Caco-2 (cell line): ENCODE measurements at regions of chr19 and their contacts with region 1.

Region 1: DNA sequence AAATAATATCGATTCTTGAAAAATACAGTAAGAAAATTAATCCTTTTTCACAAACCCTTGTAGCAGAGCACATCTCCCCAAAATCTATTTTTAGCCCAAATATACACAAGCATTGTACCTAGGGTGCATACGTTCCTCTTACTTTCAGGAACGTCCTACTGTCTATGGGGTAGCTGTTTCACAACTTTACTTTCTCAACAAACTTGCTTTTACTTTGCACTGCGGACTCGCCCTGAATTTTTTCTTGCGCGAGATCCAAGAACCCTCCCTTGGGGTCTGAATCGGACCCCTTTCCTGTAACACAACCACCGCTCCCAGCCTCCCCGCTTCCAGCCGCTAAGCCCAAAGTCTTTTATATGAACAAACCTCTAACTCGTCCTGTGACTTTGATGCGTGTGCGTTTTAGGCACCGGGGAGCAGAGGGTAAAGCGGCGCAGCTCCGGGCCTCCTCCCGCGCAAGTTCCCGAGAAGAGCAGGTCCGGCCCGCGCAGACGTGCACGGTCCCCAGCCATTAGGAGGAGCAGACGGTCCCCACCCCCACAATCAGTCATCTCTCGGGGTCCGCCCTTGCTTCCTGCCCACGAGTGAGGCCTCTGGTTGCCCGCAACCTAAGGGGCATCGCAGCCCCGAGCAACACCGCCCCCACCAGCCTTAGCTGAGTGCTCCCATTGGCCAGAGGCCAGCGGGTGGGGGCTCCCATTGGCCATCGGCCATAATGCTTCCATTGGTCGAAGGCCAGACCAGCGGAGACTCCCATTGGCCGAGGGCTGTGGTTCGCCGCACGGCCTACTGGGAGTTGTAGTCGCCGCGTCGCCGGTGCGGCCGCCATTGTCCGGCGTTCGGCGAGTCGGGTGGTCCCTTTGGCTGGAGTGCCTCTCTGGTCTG is at the start of gene ZNF8:
- DNase-seq: peak; percentile 99
- H3K4me3 ChIP-seq: peak within 1 kb of the TSS; percentile 85
- H3K4me3 Mint-ChIP-seq: peak within 1 kb of the TSS; percentile 99
- H3K27ac Mint-ChIP-seq: peak within 1 kb of the TSS; percentile 96
- H3K4me1 ChIP-seq: 0 out of 2 replicates have a peak, but pooled peaks cover 5% of the 10 kb centered on the region
- H3K4me1 Mint-ChIP-seq: peaks cover 17% of the 10 kb centered on the region
- H3K27me3 ChIP-seq: no peaks in the 10 kb centered on the region
- H3K27me3 Mint-ChIP-seq: no peaks in the 10 kb centered on the region
- CTCF ChIP-seq: no peak
- total RNA-seq, gene ZNF8: 8.4 and 8.5 TPM in 2 replicates

Region 2: DNA sequence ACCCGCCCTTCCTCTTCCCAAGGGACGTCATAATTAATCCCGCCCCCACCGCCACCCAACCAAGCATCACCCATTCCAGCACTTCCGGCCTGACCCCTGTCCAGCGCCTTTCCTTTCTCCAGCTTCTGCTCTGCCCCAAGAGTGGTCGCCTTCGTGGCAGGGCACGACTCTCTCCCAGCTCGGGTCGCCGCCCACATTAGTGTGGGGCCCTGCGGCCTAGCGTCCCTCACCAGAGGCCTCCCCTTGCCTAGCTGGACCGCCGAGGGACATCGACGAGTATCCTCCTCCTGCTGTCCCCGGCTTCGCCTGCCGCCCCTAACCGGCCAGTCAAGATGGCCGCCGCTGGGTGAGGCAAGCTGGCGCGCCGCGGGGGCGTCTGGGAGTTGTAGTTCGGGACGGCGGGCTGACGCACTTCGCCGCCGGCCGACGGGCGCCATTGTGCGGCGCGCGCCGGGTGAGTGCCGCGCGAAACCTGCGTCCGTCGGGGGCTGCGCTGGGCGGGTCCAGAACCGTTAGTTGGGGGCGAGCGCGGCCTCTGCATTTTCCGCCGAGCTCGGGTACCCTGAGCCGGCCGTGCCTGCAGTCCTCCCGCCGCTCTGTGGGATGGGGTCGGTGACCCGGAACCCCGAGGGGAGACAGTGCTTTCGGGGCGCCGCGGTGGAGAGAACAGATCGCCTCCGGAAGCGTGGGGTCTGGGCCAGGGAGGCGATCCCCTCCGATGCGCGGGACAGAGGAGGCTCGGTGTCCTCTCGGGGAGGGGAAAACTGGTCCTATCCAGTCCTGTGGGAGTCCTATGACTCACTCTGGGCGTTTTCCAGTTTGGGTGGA is 95.2 kb before region 1 on chr19 and contains the start of gene ZNF274:
- CTCF ChIA-PET with region 1: no interaction called
- POLR2A ChIA-PET with region 1: interaction called, 3 read pairs
- intact Hi-C with region 1: loop called (anchors 5 kb)
- DNase-seq: peak; percentile 96 to 97
- H3K4me3 ChIP-seq: peak within 1 kb of the TSS; percentile 72
- H3K4me3 Mint-ChIP-seq: peak within 1 kb of the TSS; percentile 86
- H3K27ac Mint-ChIP-seq: peak within 1 kb of the TSS; percentile 95
- H3K4me1 ChIP-seq: 0 out of 2 replicates have a peak, but pooled peaks cover 3% of the 10 kb centered on the region
- H3K4me1 Mint-ChIP-seq: no peaks in the 10 kb centered on the region
- H3K27me3 ChIP-seq: no peaks in the 10 kb centered on the region
- H3K27me3 Mint-ChIP-seq: no peaks in the 10 kb centered on the region
- CTCF ChIP-seq: no peak
- total RNA-seq, gene ZNF274: 19.9 and 21.6 TPM in 2 replicates

Region 3: GRCh38 chr19:58228585-58229254 is 49.7 kb before region 1 on chr19 and contains the start of gene ZNF544:
- CTCF ChIA-PET with region 1: no interaction called
- POLR2A ChIA-PET with region 1: interaction called, 3 read pairs
- intact Hi-C with region 1: loop called (anchors 2 kb)
- DNase-seq: peak; percentile 86 to 88
- H3K4me3 ChIP-seq: peak within 1 kb of the TSS; percentile 66
- H3K4me3 Mint-ChIP-seq: peak within 1 kb of the TSS; percentile 96
- H3K27ac Mint-ChIP-seq: peak within 1 kb of the TSS; percentile 99
- H3K4me1 ChIP-seq: peaks cover 5% of the 10 kb centered on the region; the same call in 1 of the 2 replicates
- H3K4me1 Mint-ChIP-seq: peaks cover 7% of the 10 kb centered on the region
- H3K27me3 ChIP-seq: no peaks in the 10 kb centered on the region
- H3K27me3 Mint-ChIP-seq: no peaks in the 10 kb centered on the region
- CTCF ChIP-seq: peak; percentile 15 to 18
- total RNA-seq, gene ZNF544: 48.7 and 53.8 TPM in 2 replicates

Region 4: GRCh38 chr19:58305065-58305931 is 26.9 kb after region 1 on chr19 and contains the start of gene ERVK3-1:
- CTCF ChIA-PET with region 1: no interaction called
- POLR2A ChIA-PET with region 1: interaction called, 3 read pairs
- intact Hi-C with region 1: loop called (anchors 1 kb)
- DNase-seq: peak; percentile 94 to 95
- H3K4me3 ChIP-seq: peak within 1 kb of the TSS; percentile 68
- H3K4me3 Mint-ChIP-seq: peak within 1 kb of the TSS; percentile 93
- H3K27ac Mint-ChIP-seq: peak within 1 kb of the TSS; percentile 97
- H3K4me1 ChIP-seq: peaks cover 11% of the 10 kb centered on the region
- H3K4me1 Mint-ChIP-seq: peaks cover 8% of the 10 kb centered on the region
- H3K27me3 ChIP-seq: no peaks in the 10 kb centered on the region
- H3K27me3 Mint-ChIP-seq: no peaks in the 10 kb centered on the region
- CTCF ChIP-seq: no peak
- total RNA-seq, gene ERVK3-1: 61.3 and 66.1 TPM in 2 replicates

Region 5: GRCh38 chr19:58326914-58327726 is 48.7 kb after region 1 on chr19 and contains the start of gene ZSCAN22:
- CTCF ChIA-PET with region 1: no interaction called
- POLR2A ChIA-PET with region 1: interaction called, 3 read pairs
- intact Hi-C with region 1: loop called (anchors 2 kb)
- DNase-seq: peak; percentile 95 to 96
- H3K4me3 ChIP-seq: peak within 1 kb of the TSS; percentile 79
- H3K4me3 Mint-ChIP-seq: no peak within 1 kb of the TSS
- H3K27ac Mint-ChIP-seq: no peak within 1 kb of the TSS
- H3K4me1 ChIP-seq: peaks cover 4% of the 10 kb centered on the region; the same call in 1 of the 2 replicates
- H3K4me1 Mint-ChIP-seq: peaks cover 5% of the 10 kb centered on the region
- H3K27me3 ChIP-seq: no peaks in the 10 kb centered on the region
- H3K27me3 Mint-ChIP-seq: no peaks in the 10 kb centered on the region
- CTCF ChIP-seq: no peak
- total RNA-seq, gene ZSCAN22: 4.0 and 4.3 TPM in 2 replicates

Region 6: DNA sequence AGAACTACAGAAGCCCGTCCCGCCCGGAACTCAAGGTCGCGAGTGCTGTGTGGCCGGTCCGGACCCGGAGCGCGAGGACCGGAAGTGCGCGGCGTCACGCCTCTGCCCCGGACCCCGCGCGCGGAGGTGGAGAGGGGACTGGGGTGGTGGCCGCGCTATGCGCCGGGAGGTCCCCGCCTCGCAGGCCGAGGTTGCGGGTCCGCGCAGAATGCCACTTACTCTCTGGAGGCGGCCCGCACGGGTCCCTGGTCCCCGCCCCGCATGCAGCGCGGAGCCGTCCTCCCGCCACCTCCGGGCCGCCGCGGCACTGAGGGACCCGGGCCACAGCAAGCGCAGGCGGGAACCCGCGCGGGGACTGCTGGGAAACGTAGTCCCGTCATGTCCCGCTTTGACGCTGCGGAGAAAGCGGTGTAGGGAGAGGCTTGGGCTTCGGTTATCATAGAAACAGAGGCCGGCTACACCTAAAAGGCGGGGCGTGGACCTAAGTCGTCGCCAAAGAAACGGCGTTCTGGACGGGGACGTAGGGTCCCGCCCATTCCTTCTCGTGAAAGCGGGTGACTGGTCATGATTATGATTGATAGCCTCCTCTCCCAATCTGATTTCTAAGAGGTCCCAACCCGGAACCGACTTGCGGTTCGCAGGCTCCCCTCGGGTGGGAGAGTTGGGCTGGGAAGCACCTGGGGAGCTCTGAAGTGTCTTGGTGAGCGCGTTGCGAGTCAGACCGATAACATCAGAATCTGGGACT is 102.5 kb after region 1 on chr19 and contains the start of gene ZNF837:
- CTCF ChIA-PET with region 1: no interaction called
- POLR2A ChIA-PET with region 1: no interaction called
- intact Hi-C with region 1: loop called (anchors 2 kb)
- DNase-seq: peak; percentile 99 to 100
- H3K4me3 ChIP-seq: peak within 1 kb of the TSS; percentile 68
- H3K4me3 Mint-ChIP-seq: peak within 1 kb of the TSS; percentile 87
- H3K27ac Mint-ChIP-seq: peak within 1 kb of the TSS; percentile 85
- H3K4me1 ChIP-seq: peaks cover 18% of the 10 kb centered on the region
- H3K4me1 Mint-ChIP-seq: peaks cover 12% of the 10 kb centered on the region
- H3K27me3 ChIP-seq: no peaks in the 10 kb centered on the region
- H3K27me3 Mint-ChIP-seq: no peaks in the 10 kb centered on the region
- CTCF ChIP-seq: no peak
- total RNA-seq, gene ZNF837: 2.2 and 2.3 TPM in 2 replicates